MCF 10A (cell line): ENCODE measurements at regions of chr17 and their contacts with region 1.

Region 1: DNA sequence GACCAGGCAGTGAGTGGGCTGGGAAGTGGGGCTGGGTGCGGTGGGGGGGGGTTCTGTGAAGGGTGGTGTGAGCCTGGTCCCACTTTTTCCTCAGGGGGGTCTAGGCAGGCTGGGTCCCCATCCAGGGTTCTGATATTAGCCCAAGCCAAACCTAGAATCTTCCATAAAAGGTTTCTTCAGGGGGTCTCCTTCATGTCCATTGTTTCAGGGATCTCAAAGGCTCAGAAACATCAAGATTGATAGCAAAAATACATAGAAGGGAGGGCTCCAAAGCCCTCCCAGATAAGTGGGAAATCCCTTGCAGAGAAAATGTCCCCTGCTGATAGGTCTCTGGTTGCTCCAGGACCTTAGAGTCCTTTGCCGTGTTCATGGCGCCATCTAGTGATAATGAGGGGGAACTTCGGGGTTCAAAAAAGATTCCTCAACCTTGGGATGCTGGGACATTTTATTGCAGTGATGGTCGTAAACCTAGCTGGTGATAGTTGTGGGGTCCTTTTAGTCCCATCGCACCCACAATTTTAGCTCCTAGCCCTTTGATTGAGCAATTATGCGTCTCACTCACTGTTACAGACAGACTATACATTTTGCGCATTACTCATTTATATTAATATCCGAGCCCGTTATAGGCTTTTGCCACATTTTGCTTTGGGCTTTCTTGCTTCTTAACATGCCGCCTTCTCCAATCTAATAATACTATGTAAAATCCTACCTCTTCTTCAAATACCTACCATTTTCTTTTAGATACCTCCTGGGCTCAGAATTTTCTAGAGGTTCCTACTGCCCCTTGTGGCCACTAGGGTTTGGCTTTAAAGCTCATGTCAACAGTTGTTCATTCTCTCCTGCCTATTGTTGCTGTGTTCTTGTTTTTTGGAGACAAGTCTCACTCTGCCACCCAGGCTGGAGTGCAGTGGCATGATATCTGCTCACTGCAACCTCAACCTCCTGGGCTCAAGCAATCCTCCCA is 35.1 kb downstream of the IGF2BP1 start:
- DNase-seq: peak; percentile 82
- H3K4me3 Mint-ChIP-seq: no peak overlapping the region
- H3K27ac Mint-ChIP-seq: no peak overlapping the region
- H3K4me1 Mint-ChIP-seq: peaks cover 12% of the 10 kb centered on the region
- H3K27me3 Mint-ChIP-seq: peaks cover 11% of the 10 kb centered on the region
- CTCF ChIP-seq: peak; percentile 52

Region 2: DNA sequence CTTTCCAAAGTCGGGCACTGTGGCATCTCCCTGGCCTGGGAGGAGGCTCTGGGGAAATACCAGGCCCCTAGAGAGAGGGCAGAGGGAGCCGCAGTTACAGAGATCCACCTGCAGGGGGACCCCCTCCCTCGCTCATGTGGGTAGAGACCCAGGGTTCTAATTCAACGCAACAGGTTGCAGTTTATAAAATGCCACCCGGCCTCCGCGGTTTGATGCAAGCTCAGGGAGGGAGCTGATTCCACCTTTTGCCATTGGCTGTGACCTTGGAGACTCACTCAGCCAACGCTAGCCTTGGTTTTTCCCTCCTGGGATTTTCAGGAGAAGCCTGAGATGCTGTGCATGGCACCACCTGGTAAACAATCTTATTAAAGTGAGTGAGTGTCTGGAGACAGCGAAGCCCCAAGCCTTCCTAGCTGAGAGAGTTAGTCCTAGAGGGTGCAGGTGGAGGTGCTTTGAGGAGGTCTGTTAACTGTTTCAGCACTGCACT is 227.3 kb before region 1 on chr17:
- CTCF ChIA-PET with region 1: interaction called, 5 read pairs
- POLR2A ChIA-PET with region 1: no interaction called
- intact Hi-C with region 1: loop called (anchors 2 kb)
- DNase-seq: peak; percentile 67
- H3K4me3 Mint-ChIP-seq: no peak overlapping the region
- H3K27ac Mint-ChIP-seq: no peak overlapping the region
- H3K4me1 Mint-ChIP-seq: peaks cover 4% of the 10 kb centered on the region
- H3K27me3 Mint-ChIP-seq: peaks cover 11% of the 10 kb centered on the region
- CTCF ChIP-seq: peak; percentile 89

Region 3: GRCh38 chr17:48892940-48893645 is 139.2 kb before region 1 on chr17:
- CTCF ChIA-PET with region 1: interaction called, 9 read pairs
- POLR2A ChIA-PET with region 1: interaction called, 8 read pairs
- intact Hi-C with region 1: loop called (anchors 1 kb)
- DNase-seq: no peak
- H3K4me3 Mint-ChIP-seq: peak overlapping the region; percentile 99
- H3K27ac Mint-ChIP-seq: peak overlapping the region; percentile 95
- H3K4me1 Mint-ChIP-seq: no peaks in the 10 kb centered on the region
- H3K27me3 Mint-ChIP-seq: no peaks in the 10 kb centered on the region
- CTCF ChIP-seq: no peak

Region 4: GRCh38 chr17:48954300-48954755 is 77.9 kb before region 1 on chr17:
- CTCF ChIA-PET with region 1: interaction called, 4 read pairs
- POLR2A ChIA-PET with region 1: no interaction called
- intact Hi-C with region 1: loop called (anchors 1 kb)
- DNase-seq: peak; percentile 64
- H3K4me3 Mint-ChIP-seq: no peak overlapping the region
- H3K27ac Mint-ChIP-seq: no peak overlapping the region
- H3K4me1 Mint-ChIP-seq: no peaks in the 10 kb centered on the region
- H3K27me3 Mint-ChIP-seq: no peaks in the 10 kb centered on the region
- CTCF ChIP-seq: peak; percentile 40

Region 5: DNA sequence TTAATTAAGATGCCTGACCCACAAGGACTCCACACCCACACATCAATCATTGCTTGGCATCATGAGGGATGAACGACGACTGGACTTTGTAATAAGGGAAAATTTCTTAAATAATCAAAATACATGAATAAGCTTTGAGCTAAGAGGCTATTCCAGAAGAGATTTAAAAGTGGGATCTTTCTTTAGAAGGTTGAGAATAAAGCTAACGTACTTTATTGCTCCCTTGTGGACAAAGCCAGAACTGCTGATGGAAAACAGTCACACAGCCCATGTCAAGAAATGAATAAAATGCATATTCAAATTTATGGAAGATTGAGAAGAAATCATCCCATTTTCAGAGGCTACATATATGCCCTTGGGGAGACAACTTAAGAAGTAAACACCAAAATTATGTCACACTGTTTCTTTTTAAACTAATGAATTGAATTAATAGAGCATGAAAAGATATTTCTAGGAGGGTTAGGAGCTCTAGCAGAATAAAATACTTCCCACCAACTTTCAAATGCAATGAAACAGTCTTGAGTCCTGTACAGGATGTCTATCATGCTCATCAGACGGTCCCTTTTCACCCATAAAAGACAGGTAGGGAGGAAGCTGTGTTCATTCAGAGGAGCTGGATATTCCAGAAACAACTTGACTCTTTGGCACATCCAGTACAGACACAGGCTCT is 258.6 kb after region 1 on chr17:
- CTCF ChIA-PET with region 1: interaction called, 4 read pairs
- POLR2A ChIA-PET with region 1: no interaction called
- intact Hi-C with region 1: loop called (anchors 10 kb)
- DNase-seq: peak; percentile 47
- H3K4me3 Mint-ChIP-seq: no peak overlapping the region
- H3K27ac Mint-ChIP-seq: no peak overlapping the region
- H3K4me1 Mint-ChIP-seq: no peaks in the 10 kb centered on the region
- H3K27me3 Mint-ChIP-seq: no peaks in the 10 kb centered on the region
- CTCF ChIP-seq: peak; percentile 49